ENCODE measurements at regions of chr15 and their contacts with region 1.

Region 1: GRCh38 chr15:78872972-78873792 is 492 bp downstream of the MORF4L1 start:
- DNase-seq: peak; percentile 96
- ATAC-seq: peak; percentile 80
- H3K4me3 Mint-ChIP-seq: peak overlapping the region; percentile 99
- H3K27ac Mint-ChIP-seq: peak overlapping the region; percentile 99
- H3K4me1 Mint-ChIP-seq: peaks cover 34% of the 10 kb centered on the region
- H3K27me3 Mint-ChIP-seq: no peaks in the 10 kb centered on the region

Region 2: DNA sequence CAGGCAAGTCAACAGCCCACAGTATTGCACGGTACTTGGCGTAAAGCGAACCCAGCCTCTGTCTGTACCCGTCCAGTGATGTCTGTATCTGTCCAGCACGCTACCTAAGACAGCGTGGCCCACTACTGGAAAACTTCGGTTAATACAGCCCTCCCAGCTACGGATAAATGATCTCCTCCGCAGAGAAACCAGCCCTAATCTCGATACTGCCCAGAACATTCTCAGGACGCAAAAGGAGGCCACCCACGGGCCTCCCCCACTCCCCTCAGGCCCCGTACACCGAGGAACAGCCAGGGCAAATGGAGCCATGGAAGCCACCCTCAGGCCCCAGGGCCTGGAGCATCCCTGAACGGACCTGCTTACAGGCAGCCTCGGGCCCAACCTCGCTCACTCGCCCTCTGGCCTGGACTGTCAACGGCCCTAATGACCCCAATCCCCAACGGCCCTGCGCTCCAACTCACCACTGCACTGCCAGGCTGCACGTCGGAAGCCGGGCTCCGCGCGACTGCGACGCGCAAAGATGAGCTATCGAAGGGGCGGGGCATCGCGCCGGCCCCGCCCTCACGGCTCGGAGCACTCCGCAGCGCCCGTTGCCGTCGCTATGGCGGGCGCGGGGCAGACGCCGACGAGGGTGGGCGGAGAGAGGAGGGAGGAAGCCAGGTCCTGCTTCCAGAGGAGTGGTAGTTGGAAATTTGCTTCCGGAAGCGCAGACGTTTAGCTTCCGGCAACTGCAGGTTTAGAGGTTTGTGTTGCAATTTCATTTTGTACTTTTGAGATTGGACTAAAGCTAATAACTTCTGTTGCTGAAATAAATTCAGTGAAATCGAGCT is 573.9 kb before region 1 on chr15 and contains the start of gene SKIC8:
- CTCF ChIA-PET with region 1: no interaction called
- POLR2A ChIA-PET with region 1: no interaction called
- intact Hi-C with region 1: loop called in 1 of 2 experiments (anchors 1 kb)
- DNase-seq: peak; percentile 95
- ATAC-seq: peak; percentile 96
- H3K4me3 Mint-ChIP-seq: peak within 1 kb of the TSS; percentile 96
- H3K27ac Mint-ChIP-seq: peak within 1 kb of the TSS; percentile 91
- H3K4me1 Mint-ChIP-seq: peaks cover 29% of the 10 kb centered on the region
- H3K27me3 Mint-ChIP-seq: no peaks in the 10 kb centered on the region
- total RNA-seq, gene SKIC8: 39.2 to 52.6 TPM

Region 3: DNA sequence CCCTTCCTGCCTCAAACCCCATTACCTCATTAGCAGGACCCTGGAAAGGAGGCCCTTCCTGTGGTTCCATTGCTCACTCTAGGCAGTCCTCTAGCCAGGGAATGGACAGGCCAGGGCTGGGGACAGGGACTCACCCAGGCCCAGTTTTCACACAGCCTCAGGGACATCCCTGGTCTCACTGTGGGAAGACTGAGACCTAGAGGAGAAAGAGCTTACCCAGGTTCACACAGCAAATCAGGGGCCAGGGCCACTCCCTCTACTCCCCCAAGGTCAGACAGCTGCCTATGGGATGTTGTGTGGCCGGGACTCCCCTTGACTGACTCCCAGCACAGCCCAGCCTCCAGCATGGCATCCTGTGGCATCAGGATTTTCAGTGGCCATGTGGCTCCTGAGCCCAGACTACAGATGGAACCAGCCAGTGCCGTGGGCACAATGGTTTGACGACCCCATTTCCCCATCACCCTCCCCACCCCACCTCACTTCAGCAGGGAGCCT is 111.2 kb before region 1 on chr15:
- CTCF ChIA-PET with region 1: interaction called, 3 read pairs
- POLR2A ChIA-PET with region 1: no interaction called
- intact Hi-C with region 1: loop called in 1 of 2 experiments (anchors 2 kb)
- DNase-seq: no peak
- ATAC-seq: peak; percentile 7
- H3K4me3 Mint-ChIP-seq: no peak overlapping the region
- H3K27ac Mint-ChIP-seq: peak overlapping the region; percentile 86
- H3K4me1 Mint-ChIP-seq: peaks cover 25% of the 10 kb centered on the region
- H3K27me3 Mint-ChIP-seq: no peaks in the 10 kb centered on the region

Region 4: DNA sequence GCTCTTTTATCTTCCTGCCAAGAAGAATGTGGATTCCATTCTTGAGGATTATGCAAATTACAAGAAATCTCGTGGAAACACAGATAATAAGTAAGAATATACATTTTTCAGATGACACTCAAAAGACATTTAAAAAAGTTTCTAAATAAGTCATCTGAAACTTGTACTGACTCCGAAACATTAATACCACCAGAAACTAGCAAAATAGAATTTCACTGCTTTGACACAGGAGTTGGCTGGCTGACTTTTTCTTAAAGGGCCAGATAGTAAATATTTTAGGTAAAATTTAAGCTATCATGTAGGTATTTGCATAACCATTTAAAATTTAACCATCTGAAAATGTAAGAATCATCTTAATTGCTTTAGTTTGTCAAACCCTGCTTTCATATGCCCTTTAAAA is 20.4 kb after region 1 on chr15:
- CTCF ChIA-PET with region 1: interaction called, 3 read pairs
- POLR2A ChIA-PET with region 1: no interaction called
- intact Hi-C with region 1: loop called in 1 of 2 experiments (anchors 2 kb)
- DNase-seq: no peak
- ATAC-seq: peak; percentile 33
- H3K4me3 Mint-ChIP-seq: no peak overlapping the region
- H3K27ac Mint-ChIP-seq: no peak overlapping the region
- H3K4me1 Mint-ChIP-seq: peaks cover 25% of the 10 kb centered on the region
- H3K27me3 Mint-ChIP-seq: no peaks in the 10 kb centered on the region

Region 5: DNA sequence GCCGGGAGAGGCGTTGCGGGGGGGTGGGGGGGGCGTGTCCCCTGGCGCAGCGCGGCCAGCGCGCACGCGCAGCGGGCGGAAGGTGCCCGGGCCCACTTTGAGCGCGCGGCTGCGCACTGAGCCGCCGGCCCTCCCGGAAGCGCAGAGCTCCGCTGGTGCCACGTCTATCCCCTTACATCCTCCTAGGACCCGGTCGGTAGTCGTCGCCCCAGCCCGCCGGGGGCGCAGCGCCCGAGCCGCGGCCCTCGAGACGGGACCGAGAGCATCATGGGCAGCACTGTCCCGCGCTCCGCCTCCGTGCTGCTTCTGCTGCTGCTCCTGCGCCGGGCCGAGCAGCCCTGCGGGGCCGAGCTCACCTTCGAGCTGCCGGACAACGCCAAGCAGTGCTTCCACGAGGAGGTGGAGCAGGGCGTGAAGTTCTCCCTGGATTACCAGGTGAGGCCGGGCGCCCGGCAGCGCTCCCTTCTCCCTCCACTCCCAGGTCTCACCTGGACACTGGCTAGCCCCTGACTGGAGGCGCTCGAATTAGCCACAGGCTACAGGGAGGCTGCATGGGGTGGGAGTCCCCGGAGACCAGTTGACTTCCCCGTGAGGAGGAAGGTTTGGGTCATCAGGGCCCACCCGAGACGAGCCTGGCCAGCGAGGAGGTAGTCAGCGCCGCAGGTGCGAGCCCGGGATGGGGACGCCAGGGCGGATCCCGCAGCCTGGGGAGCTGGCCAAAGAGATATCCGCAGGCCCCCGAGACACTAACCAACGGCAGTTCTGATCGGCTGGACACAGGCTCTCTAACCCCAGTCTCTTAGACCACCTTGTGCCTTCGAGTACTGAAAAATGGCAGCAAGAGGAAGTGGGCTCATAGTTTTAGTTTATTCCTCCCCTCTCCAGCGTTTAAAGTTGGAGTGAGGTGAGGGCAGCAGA is 438.1 kb after region 1 on chr15 and contains the start of gene TMED3:
- CTCF ChIA-PET with region 1: no interaction called
- POLR2A ChIA-PET with region 1: no interaction called
- intact Hi-C with region 1: no loop called
- DNase-seq: peak; percentile 90
- ATAC-seq: peak; percentile 98
- H3K4me3 Mint-ChIP-seq: peak within 1 kb of the TSS; percentile 81
- H3K27ac Mint-ChIP-seq: peak within 1 kb of the TSS; percentile 77
- H3K4me1 Mint-ChIP-seq: peaks cover 28% of the 10 kb centered on the region
- H3K27me3 Mint-ChIP-seq: peaks cover 23% of the 10 kb centered on the region
- total RNA-seq, gene TMED3: 33.5 to 37.2 TPM

Region 6: GRCh38 chr15:80152180-80152845 is 1279.1 kb after region 1 on chr15:
- CTCF ChIA-PET with region 1: no interaction called
- POLR2A ChIA-PET with region 1: no interaction called
- intact Hi-C with region 1: loop called in 1 of 2 experiments (anchors 10 kb)
- DNase-seq: peak; percentile 98
- ATAC-seq: peak; percentile 81
- H3K4me3 Mint-ChIP-seq: peak overlapping the region; percentile 77
- H3K27ac Mint-ChIP-seq: peak overlapping the region; percentile 76
- H3K4me1 Mint-ChIP-seq: peaks cover 27% of the 10 kb centered on the region
- H3K27me3 Mint-ChIP-seq: no peaks in the 10 kb centered on the region

Measured in activated CD4-positive, alpha-beta T cell treated with anti-CD3 and anti-CD28 coated beads for 36 hours (primary cell).